Heart right ventricle (tissue), 16 donors: ENCODE measurements at regions of chr11 and their contacts with region 1.

Region 1: DNA sequence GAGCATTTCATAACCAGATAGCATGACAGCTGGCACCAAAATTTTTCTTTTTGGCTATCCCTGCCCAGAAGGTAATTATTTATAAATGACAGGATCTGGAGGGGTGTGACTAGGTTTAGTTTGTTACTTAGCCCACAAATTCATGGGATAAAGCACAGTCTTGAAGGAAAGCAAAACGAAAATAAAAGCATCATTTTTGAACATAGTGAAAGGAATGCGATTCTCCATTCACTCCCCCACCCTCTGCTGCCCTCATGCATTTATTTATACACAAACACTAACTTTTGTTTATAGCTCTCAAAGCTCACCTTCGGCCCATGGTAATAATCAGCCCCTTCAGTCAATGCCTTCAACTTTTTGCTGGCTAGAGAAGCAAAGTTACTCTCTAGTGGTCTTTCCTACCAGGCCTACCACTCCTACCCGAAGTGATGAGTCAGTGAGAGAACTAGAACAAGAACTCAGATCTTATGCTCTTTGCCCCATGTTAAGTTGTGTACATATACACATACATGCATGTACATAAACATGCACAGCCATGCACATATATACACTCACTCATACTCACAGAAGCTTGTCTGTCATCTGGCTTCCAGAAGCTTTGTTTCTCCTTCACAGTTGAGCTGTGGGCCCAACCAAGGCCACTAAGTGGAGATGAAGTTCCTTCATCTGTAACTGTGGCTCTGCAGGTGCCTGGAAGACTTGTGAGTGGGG is 22.6 kb downstream of the CALCA start:
- DNase-seq: no peak
- ATAC-seq: no peak
- H3K4me3 ChIP-seq: no peak overlapping the region
- H3K27ac ChIP-seq: no peak overlapping the region
- H3K4me1 ChIP-seq: no peaks in the 10 kb centered on the region
- H3K27me3 ChIP-seq: no peaks in the 10 kb centered on the region
- CTCF ChIP-seq: no peak

Region 2: GRCh38 chr11:14821031-14821430 is 128.6 kb before region 1 on chr11:
- intact Hi-C with region 1: no loop called
- DNase-seq: no peak
- ATAC-seq: no peak
- H3K4me3 ChIP-seq: no peak overlapping the region
- H3K27ac ChIP-seq: no peak overlapping the region
- H3K4me1 ChIP-seq: no peaks in the 10 kb centered on the region
- H3K27me3 ChIP-seq: no peaks in the 10 kb centered on the region
- CTCF ChIP-seq: no peak

Region 3: DNA sequence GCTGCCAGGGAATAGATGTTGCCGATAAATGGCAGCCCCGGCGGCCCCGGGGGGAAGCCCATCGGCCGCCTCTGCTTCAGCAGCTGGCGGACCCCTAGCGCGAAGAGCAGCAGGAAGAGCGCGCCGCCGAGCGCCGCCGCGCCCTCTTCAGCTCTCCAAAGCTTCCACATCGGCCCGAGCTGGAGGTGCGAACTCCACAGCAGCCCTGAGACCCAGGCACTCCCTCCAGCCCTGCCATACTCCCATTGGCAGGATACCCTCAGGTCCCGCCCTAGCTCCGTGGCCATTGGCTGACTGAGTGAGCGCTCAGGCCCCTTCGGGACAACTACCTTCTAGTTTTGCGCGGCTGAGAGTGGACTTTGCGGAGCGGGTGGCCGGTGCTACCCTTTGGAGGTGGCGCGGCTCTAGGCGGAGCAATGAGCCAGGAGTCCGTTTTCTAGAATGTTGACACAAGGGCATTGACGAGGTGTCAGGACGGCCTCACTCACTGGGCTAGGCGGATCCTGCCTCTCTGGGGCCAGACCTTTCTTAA is 57.5 kb before region 1 on chr11 and contains the start of gene CYP2R1:
- intact Hi-C with region 1: no loop called
- DNase-seq: peak; percentile 94 to 97
- ATAC-seq: peak; percentile 98 to 99 (median 99)
- H3K4me3 ChIP-seq: peak within 1 kb of the TSS; percentile 57 to 94 (median 84)
- H3K27ac ChIP-seq: peak within 1 kb of the TSS; percentile 16 to 96 (median 90)
- H3K4me1 ChIP-seq: peaks cover 0 to 36% (median 10%) of the 10 kb centered on the region in 9 donors
- H3K27me3 ChIP-seq: no peaks in the 10 kb centered on the region
- CTCF ChIP-seq: peak in 1 of 9 donors; percentile 11
- total RNA-seq, gene CYP2R1: 4.6 to 7.3 (median 6.3) TPM

Region 4: GRCh38 chr11:15955595-15955994 is 1006.0 kb after region 1 on chr11:
- intact Hi-C with region 1: loop called in 1 of 10 experiments (anchors 5 kb)
- DNase-seq: no peak
- ATAC-seq: no peak
- H3K4me3 ChIP-seq: no peak overlapping the region
- H3K27ac ChIP-seq: no peak overlapping the region
- H3K4me1 ChIP-seq: peaks cover 0 to 10% (median 0%) of the 10 kb centered on the region in 9 donors
- H3K27me3 ChIP-seq: no peaks in the 10 kb centered on the region
- CTCF ChIP-seq: no peak